OCI-LY7 (cell line): ENCODE measurements at regions of chr2 and their contacts with region 1.

Region 1: GRCh38 chr2:128503804-128504652 is 185.4 kb upstream of the HS6ST1 start:
- DNase-seq: peak; percentile 79
- H3K4me3 ChIP-seq: no peak overlapping the region
- H3K27ac ChIP-seq: no peak overlapping the region
- H3K4me1 ChIP-seq: peaks cover 24% of the 10 kb centered on the region
- CTCF ChIP-seq: no peak

Region 2: DNA sequence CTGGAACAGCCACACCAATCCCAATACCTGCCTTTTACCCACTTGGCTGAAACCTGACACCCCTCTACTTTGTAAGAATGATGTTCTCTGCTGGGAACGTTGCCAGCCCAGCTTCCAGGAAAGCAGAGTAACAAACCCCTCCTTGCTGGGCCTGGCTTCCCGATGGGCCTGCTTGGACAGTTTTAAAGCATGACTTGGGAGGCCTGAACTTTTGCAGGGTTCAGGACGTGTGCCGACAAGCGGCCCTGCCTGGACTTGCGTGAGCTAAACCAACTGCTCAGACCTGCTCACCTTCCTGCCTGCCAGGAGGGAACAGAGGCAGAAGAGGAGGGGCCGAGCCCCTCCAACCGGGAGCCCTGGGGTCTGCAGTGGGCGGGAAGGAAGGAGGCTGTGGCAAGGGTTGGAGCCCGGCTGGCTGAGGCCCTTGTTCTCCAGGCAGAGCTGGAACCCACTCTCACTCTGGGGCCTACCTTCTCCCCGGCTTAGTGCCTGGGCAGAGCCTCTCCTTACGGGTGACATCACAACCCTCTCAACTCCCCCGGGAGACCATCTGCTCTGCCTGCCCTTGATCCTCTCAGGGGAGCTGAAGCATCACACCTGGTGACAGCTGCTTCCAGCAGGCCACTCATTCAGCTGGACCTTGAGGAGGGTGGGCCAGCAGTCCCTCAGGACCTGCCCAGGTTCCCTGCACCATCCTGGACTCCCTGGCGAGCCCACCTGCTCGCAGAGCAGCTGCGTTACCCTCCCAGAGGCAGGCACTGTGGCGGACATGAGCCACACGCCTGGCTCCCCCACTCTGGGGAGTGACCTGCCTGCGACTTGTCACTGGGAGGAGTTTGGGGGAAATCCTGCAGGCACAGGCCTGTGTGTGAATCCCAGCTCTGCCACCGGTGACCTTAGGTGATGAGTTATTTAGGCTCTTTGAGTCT is 198.6 kb before region 1 on chr2:
- CTCF ChIA-PET with region 1: no interaction called
- POLR2A ChIA-PET with region 1: no interaction called
- intact Hi-C with region 1: loop called (anchors 10 kb)
- DNase-seq: peak; percentile 89
- H3K4me3 ChIP-seq: peak overlapping the region; percentile 25
- H3K27ac ChIP-seq: no peak overlapping the region
- H3K4me1 ChIP-seq: peaks cover 27% of the 10 kb centered on the region
- CTCF ChIP-seq: no peak

Region 3: DNA sequence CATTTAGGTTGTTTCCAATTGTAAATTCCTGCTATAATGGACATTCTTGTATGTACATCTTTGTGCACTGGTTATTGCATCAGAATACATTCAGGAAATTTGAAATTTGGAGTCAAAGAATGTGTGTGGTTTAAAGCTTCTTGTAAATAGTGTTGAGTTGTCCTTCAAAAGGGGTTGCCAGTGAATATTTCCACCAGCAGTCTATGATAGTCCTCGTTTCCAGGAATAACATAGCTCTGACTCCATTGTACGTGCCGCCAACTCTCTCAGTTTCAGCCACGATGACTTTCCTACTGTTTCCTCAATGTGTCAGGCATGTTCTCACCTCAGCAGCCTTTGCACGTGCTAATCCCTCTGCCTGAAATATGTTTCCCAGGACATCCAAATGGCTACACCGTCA is 174.4 kb before region 1 on chr2:
- CTCF ChIA-PET with region 1: no interaction called
- POLR2A ChIA-PET with region 1: no interaction called
- intact Hi-C with region 1: no loop called
- DNase-seq: no peak
- H3K4me3 ChIP-seq: no peak overlapping the region
- H3K27ac ChIP-seq: no peak overlapping the region
- H3K4me1 ChIP-seq: no peaks in the 10 kb centered on the region
- CTCF ChIP-seq: no peak

Region 4: DNA sequence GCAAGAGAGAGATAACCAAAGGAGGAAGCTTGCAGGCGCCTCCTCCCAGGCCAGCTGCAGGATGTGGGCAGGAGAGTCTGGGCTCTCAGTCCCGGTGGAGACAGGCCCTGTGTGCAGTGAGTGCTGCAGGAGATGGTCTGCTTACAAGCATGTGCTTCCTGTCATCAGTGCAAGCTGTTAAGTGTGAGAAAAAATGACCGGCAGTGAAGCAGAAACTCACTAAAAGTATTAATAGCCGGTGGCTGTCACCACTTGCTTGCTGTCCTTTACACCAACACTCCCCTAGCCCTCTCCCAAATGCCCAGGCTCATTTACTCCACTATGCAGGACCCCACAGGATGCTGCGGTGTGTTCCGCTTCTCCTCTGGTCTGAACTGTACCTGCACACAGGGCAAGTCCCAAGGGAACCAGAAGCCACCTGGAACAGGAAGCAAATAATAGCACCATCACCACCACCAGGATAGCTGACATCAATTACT is 250.3 kb after region 1 on chr2:
- CTCF ChIA-PET with region 1: no interaction called
- POLR2A ChIA-PET with region 1: no interaction called
- intact Hi-C with region 1: loop called (anchors 10 kb)
- DNase-seq: peak; percentile 93
- H3K4me3 ChIP-seq: peak overlapping the region; percentile 58
- H3K27ac ChIP-seq: peak overlapping the region; percentile 99
- H3K4me1 ChIP-seq: peaks cover 67% of the 10 kb centered on the region
- CTCF ChIP-seq: no peak